ENCODE measurements at regions of chr5 and their contacts with region 1.

Region 1: GRCh38 chr5:160269017-160269416 is 39.7 kb downstream of the FABP6 start:
- DNase-seq: peak; percentile 94
- ATAC-seq: peak; percentile 91

Region 2: DNA sequence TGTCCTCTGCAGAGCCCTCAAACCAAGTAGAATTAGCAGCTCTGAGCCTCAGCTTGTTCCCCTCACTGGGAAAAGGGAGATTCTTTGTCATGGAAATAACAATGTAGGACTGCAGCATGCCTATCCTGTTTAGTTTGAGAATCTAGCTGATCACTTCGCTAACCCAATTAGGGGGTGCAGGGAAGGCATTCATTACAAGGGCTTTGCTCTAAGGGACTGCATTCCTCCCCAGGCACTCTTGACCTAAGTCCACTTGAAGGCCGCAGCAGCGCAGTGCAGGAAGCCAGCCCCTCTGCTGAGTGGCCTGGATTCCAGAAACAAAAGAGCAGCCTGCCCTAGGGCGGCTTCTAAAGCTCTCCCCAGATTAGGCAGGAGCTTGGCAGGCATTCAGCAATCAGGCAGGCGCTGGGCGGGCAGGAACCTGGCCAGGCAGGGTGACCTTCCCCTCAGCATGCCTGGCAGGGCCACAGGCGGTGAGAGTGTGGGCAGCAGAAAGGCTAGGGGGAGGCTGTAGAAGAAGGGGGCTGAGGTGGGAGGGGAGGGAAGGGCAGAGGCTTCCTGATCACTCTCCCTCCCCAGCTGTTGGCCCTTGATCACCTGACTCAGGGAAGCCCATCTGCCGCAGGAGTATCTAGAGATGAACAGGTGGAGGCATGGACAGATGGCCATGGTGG is 18.5 kb after region 1 on chr5:
- intact Hi-C with region 1: loop called (anchors 2 kb)
- DNase-seq: peak; percentile 82
- ATAC-seq: peak; percentile 95